ENCODE measurements at regions of chr2 and their contacts with region 1.

Region 1: GRCh38 chr2:228048838-228049490 is 132.5 kb downstream of the SPHKAP start:
- DNase-seq: peak; percentile 88
- H3K4me3 ChIP-seq: no peak overlapping the region
- H3K27ac ChIP-seq: no peak overlapping the region
- H3K4me1 ChIP-seq: peaks cover 30% of the 10 kb centered on the region
- H3K27me3 ChIP-seq: no peaks in the 10 kb centered on the region
- CTCF ChIP-seq: peak; percentile 77

Region 2: GRCh38 chr2:227890495-227891079 is 158.4 kb before region 1 on chr2:
- CTCF ChIA-PET with region 1: no interaction called
- POLR2A ChIA-PET with region 1: no interaction called
- intact Hi-C with region 1: loop called (anchors 5 kb)
- DNase-seq: peak; percentile 83
- H3K4me3 ChIP-seq: no peak overlapping the region
- H3K27ac ChIP-seq: peak overlapping the region; percentile 62
- H3K4me1 ChIP-seq: peaks cover 12% of the 10 kb centered on the region
- H3K27me3 ChIP-seq: no peaks in the 10 kb centered on the region
- CTCF ChIP-seq: peak; percentile 68

Region 3: DNA sequence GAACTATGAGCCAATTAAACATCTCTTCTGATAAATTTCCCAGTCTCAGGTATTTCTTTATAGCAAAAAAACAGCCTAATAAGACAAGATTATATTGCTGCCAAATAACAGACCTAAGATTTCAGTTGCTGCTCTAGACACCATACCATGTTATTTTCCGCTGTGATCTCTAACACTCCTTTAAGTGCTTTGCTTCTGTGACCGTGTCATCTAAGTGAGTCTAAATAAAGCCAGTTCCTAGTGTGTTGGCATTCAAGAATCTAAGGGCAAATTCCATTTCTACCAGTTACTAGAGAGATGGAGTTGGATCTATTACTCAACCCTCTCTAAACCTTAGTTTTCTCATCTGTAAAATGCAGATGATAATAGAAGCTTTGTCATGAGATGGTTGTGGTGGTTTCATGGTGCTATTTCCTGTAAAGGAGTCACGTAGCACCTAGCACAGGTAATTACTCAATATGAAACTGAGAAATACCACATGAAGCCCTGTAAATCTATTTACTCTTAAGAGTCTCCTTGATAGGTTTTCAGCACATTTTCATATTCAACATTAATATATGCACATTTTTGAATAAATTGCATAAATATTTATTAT is 92.1 kb after region 1 on chr2:
- CTCF ChIA-PET with region 1: no interaction called
- POLR2A ChIA-PET with region 1: interaction called, 12 read pairs
- intact Hi-C with region 1: no loop called
- DNase-seq: no peak
- H3K4me3 ChIP-seq: no peak overlapping the region
- H3K27ac ChIP-seq: no peak overlapping the region
- H3K4me1 ChIP-seq: no peaks in the 10 kb centered on the region
- H3K27me3 ChIP-seq: no peaks in the 10 kb centered on the region
- CTCF ChIP-seq: no peak

Region 4: DNA sequence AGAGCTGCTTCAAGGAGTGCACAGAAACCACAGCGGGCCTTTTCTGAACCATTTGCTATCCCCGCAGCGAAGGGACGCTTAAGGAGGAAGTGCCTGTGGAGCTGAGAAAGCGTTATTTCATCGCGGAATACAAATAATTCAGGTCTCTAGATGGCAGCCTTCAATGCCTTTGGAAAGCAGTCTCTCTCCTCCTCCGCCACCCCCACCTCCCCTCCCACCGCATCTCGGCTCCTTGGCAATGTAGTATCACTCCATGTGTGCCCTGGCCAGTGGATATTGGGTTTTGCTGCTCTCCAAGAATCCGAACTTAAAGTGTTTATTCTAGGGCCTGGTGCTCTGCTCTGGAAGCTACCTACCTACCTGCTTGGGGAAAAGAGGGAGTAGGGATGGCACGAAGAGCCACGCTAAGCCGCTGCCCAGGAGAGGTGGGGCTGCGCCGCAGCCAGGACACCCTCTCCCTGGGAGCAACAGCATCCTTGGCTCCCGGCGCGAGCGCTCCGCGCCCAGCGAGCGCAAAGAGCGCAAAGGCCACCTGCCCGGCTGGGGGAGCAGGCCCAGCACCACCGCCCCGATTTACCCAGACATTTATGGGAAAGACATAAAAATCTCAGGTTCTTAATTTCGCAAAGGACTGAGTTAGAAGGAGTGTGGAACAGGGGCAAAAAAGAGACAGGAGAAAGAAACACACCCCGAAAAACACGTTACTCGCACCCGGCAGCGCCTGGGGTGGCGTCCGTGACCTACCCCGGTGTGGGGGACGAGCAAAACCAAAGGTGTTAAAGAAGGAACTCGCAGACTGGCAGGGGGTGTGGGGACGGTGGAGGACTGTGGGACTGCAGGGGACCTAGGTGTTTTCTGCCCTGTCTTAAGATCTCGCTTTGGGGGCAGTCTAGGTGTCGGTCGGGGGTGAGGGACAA is 131.5 kb after region 1 on chr2:
- CTCF ChIA-PET with region 1: interaction called, 13 read pairs
- POLR2A ChIA-PET with region 1: no interaction called
- intact Hi-C with region 1: loop called (anchors 1 kb)
- DNase-seq: peak; percentile 96
- H3K4me3 ChIP-seq: peak overlapping the region; percentile 66
- H3K27ac ChIP-seq: peak overlapping the region; percentile 63
- H3K4me1 ChIP-seq: peaks cover 23% of the 10 kb centered on the region
- H3K27me3 ChIP-seq: no peaks in the 10 kb centered on the region
- CTCF ChIP-seq: peak; percentile 52

Measured in A673 (cell line).